PC-9 (cell line): ENCODE measurements at regions of chr2 and their contacts with region 1.

Region 1: GRCh38 chr2:174341286-174341994 is 6.7 kb downstream of the SP9 start:
- DNase-seq: peak; percentile 72 to 94
- H3K4me3 ChIP-seq: peak overlapping the region; percentile 31; the same call in 1 of the 2 replicates
- H3K27ac ChIP-seq: no peak overlapping the region
- H3K4me1 ChIP-seq: peaks cover 4% of the 10 kb centered on the region; the same call in 1 of the 2 replicates
- H3K27me3 ChIP-seq: no peaks in the 10 kb centered on the region
- CTCF ChIP-seq: peak; percentile 100

Region 2: GRCh38 chr2:173027181-173028128 is 1314.0 kb before region 1 on chr2:
- CTCF ChIA-PET with region 1: no interaction called
- POLR2A ChIA-PET with region 1: no interaction called
- intact Hi-C with region 1: loop called (anchors 1 kb)
- DNase-seq: peak; percentile 73 to 84
- H3K4me3 ChIP-seq: no peak overlapping the region
- H3K27ac ChIP-seq: no peak overlapping the region
- H3K4me1 ChIP-seq: no peaks in the 10 kb centered on the region
- H3K27me3 ChIP-seq: no peaks in the 10 kb centered on the region
- CTCF ChIP-seq: peak; percentile 100

Region 3: GRCh38 chr2:173448938-173449471 is 892.4 kb before region 1 on chr2:
- CTCF ChIA-PET with region 1: no interaction called
- POLR2A ChIA-PET with region 1: no interaction called
- intact Hi-C with region 1: loop called (anchors 2 kb)
- DNase-seq: peak; percentile 75 to 87
- H3K4me3 ChIP-seq: peak overlapping the region; percentile 47; the same call in 1 of the 2 replicates
- H3K27ac ChIP-seq: no peak overlapping the region
- H3K4me1 ChIP-seq: 0 out of 2 replicates have a peak, but pooled peaks cover 5% of the 10 kb centered on the region
- H3K27me3 ChIP-seq: peaks cover 12% of the 10 kb centered on the region; the same call in 1 of the 2 replicates
- CTCF ChIP-seq: peak; percentile 97

Region 4: DNA sequence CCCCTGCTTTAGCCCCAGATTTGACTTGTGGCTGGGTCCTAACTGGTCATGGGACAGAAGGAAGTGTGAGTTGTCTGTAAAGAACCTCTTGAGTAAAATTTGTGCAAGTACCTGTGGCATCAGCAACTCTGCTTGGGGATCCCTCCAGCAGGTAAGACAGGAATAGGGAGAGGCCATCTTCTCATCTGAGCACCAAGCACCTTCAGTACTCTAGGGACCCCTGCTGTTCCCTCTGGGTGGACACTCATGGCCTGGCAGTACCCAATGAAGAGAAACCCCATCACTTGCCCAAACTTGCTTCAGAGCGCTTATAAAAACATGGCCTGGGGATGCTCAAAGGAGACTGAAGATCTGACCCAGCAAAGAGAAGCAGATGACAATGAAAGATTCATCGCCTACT is 674.0 kb before region 1 on chr2:
- CTCF ChIA-PET with region 1: interaction called, 3 read pairs
- POLR2A ChIA-PET with region 1: no interaction called
- intact Hi-C with region 1: loop called (anchors 10 kb)
- DNase-seq: no peak
- H3K4me3 ChIP-seq: no peak overlapping the region
- H3K27ac ChIP-seq: no peak overlapping the region
- H3K4me1 ChIP-seq: peaks cover 6% of the 10 kb centered on the region; the same call in 1 of the 2 replicates
- H3K27me3 ChIP-seq: peaks cover 4% of the 10 kb centered on the region; the same call in 1 of the 2 replicates
- CTCF ChIP-seq: peak; percentile 26; the same call in 1 of the 2 replicates

Region 5: DNA sequence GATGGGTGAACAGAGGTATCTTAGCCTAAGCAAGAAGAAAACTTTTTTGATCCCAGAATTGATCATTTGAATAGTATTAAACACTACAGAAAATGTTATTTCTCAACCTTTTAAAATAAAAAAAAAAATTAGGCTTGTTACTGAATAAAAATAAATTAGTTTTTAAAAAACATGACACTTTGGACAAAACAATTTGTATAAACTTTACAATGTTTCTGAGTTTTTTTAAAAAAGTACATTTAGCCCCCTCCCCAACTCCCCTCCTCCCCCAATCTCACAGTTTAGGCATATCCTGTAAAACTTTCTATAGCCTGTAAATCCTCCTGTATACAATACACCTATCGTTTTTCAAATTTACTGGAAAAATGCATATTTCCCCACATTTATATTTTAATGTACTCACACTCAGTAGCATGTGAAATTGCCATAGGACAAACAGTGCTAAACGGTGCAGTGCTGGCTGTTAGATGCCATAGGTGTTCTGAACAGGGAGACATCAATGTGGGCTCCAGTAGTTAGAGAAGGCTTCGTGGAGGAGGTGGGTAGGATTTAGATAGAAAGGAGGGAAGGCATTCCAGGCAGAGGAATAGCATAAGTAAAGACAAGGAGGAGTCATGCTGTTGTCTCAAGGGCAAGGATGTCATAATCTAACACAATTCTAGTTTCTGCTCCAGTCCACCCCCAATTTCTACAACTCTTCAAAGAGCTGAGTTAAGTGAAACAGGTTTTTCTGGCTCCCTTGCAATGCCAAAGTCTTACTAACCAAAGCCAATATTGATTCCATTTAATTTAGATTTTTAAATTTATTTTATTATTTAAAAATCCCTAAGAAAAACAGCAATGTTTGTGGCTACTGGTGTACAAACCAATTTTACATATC is 427.1 kb before region 1 on chr2:
- CTCF ChIA-PET with region 1: no interaction called
- POLR2A ChIA-PET with region 1: no interaction called
- intact Hi-C with region 1: loop called (anchors 10 kb)
- DNase-seq: peak in 1 of 2 experiments; percentile 82
- H3K4me3 ChIP-seq: no peak overlapping the region
- H3K27ac ChIP-seq: peak overlapping the region; percentile 22; the same call in 1 of the 2 replicates
- H3K4me1 ChIP-seq: peaks cover 14% of the 10 kb centered on the region
- H3K27me3 ChIP-seq: no peaks in the 10 kb centered on the region
- CTCF ChIP-seq: no peak

Region 6: GRCh38 chr2:174158003-174158402 is 183.4 kb before region 1 on chr2:
- CTCF ChIA-PET with region 1: interaction called, 4 read pairs
- POLR2A ChIA-PET with region 1: no interaction called
- intact Hi-C with region 1: loop called (anchors 5 kb)
- DNase-seq: no peak
- H3K4me3 ChIP-seq: no peak overlapping the region
- H3K27ac ChIP-seq: no peak overlapping the region
- H3K4me1 ChIP-seq: no peaks in the 10 kb centered on the region
- H3K27me3 ChIP-seq: no peaks in the 10 kb centered on the region
- CTCF ChIP-seq: peak; percentile 74

Region 7: DNA sequence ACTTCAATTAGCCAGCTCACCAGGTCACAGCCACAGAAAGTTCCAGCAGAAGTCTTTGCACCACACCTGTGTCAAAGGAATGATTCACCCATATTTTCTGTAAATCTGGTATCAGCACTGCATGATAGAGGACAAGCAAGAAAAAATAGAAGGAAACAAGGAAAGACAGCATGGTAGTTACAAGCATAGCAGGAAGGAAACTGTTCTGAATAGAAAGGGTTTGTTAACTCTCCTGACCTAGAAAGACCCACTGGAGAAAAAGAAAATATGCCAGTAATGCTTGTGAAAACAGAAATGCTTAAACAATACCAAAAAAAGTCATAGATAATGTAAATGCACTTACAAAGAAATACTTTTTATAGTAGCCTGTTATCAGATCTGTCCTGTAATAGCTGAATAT is 94.9 kb after region 1 on chr2:
- CTCF ChIA-PET with region 1: no interaction called
- POLR2A ChIA-PET with region 1: no interaction called
- intact Hi-C with region 1: no loop called
- DNase-seq: no peak
- H3K4me3 ChIP-seq: no peak overlapping the region
- H3K27ac ChIP-seq: no peak overlapping the region
- H3K4me1 ChIP-seq: no peaks in the 10 kb centered on the region
- H3K27me3 ChIP-seq: no peaks in the 10 kb centered on the region
- CTCF ChIP-seq: no peak